Activated CD4-positive, alpha-beta T cell treated with anti-CD3 and anti-CD28 coated beads for 36 hours (primary cell): ENCODE measurements at regions of chr10 and their contacts with region 1.

Region 1: GRCh38 chr10:51422311-51423120 is 276.9 kb downstream of the CSTF2T start:
- DNase-seq: peak; percentile 59
- ATAC-seq: no peak
- H3K4me3 Mint-ChIP-seq: no peak overlapping the region
- H3K27ac Mint-ChIP-seq: no peak overlapping the region
- H3K4me1 Mint-ChIP-seq: no peaks in the 10 kb centered on the region
- H3K27me3 Mint-ChIP-seq: peaks cover 2% of the 10 kb centered on the region

Region 2: DNA sequence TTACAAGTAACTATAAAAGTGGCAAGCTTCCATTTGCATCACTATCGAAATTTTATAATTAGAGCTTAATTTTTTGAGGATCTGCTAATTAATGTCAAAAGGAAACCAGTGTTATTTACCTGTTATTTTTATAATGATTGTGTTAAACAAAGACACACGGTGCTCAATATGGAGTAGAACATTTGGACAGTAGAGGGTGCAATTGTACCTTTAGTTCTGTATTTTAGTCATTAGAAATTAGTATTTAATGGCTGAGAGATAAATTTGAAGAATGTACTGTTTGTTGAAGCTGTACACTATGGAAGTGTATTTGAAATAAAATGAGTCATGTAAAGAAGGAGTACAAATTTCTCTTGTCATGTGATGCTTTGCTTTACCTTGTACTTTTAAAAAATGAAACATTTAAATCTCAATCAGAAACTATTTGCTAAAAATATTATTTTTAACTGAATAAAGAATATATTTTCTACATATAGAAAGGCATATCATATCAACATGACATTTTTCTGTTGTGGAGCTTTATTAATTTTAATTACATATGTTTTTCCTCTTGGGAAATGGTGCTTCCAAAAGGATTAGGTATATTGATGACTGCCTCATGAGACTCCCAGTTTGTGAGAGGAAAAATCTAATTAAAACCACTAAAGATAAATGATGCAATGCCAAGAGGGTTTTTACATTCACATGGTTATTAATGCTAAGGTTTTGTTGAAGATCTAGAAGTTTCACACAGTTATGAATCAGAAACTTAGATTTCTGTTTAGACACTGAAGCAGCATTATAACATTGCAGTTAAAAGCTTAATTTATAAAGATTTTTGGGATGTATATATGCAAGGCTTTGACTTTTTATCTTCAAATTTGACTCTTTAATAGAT is 358.6 kb before region 1 on chr10:
- CTCF ChIA-PET with region 1: no interaction called
- POLR2A ChIA-PET with region 1: no interaction called
- intact Hi-C with region 1: loop called in 1 of 2 experiments (anchors 5 kb)
- DNase-seq: no peak
- ATAC-seq: no peak
- H3K4me3 Mint-ChIP-seq: no peak overlapping the region
- H3K27ac Mint-ChIP-seq: no peak overlapping the region
- H3K4me1 Mint-ChIP-seq: no peaks in the 10 kb centered on the region
- H3K27me3 Mint-ChIP-seq: peaks cover 7% of the 10 kb centered on the region